ENCODE measurements at regions of chr16 and their contacts with region 1.

Region 1: DNA sequence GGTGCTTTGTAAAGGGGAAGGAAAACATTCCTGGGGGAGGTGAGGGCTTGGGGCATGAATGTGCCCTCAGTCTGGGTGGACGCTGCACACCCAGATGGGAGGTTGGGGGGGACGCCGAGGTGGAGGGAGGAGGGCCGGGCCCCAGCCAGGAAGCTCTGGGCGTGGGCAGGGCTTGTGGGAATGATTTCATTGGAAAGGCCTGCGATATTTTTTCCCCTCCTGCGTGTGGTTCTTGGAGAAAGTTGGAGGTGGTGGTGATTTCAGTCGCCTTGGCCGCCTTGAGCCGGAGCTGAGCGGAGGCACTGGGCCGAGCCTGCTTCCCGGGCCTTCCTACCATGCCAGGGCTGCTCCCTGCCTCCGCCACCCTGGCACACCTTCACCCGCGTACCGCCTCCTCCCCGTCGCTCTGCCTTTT is 26.4 kb upstream of the CLEC18A start:
- DNase-seq: peak; percentile 79
- ATAC-seq: peak; percentile 67

Region 2: GRCh38 chr16:69859105-69859989 is 65.4 kb before region 1 on chr16:
- intact Hi-C with region 1: loop called (anchors 10 kb)
- DNase-seq: peak; percentile 65
- ATAC-seq: peak; percentile 81